ENCODE measurements at regions of chr20 and their contacts with region 1.

Region 1: GRCh38 chr20:13749811-13750210 is 34.9 kb downstream of the ESF1 start:
- DNase-seq: no peak
- ATAC-seq: no peak
- H3K4me3 ChIP-seq: no peak overlapping the region
- H3K27ac ChIP-seq: no peak overlapping the region
- H3K4me1 ChIP-seq: peaks cover 0 to 2% of the 10 kb centered on the region in 2 donors
- H3K27me3 ChIP-seq: no peaks in the 10 kb centered on the region

Region 2: DNA sequence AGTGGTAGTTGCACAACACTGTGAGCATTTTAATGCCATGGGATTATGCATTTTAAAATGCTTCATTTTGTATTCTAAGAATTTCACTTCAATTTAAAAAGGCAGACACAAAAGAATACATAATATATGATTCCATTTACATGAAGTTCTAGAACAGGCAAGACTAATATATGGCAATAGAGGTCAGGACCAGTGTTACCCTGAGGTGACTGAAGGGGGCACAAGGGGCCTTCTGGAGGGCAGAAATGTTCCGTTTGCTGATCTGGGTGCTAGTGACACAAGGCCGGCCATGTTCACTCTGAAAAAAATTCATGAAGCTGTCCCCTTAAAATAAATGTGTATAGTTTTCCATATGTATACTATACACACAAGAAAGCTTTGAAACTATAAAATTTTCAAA is 139.6 kb before region 1 on chr20:
- intact Hi-C with region 1: loop called in 1 of 2 experiments (anchors 5 kb)
- DNase-seq: no peak
- ATAC-seq: no peak
- H3K4me3 ChIP-seq: no peak overlapping the region
- H3K27ac ChIP-seq: no peak overlapping the region
- H3K4me1 ChIP-seq: no peaks in the 10 kb centered on the region
- H3K27me3 ChIP-seq: no peaks in the 10 kb centered on the region

Measured in aorta (tissue), 5 donors.